SK-N-SH (cell line): ENCODE measurements at regions of chr18 and their contacts with region 1.

Region 1: DNA sequence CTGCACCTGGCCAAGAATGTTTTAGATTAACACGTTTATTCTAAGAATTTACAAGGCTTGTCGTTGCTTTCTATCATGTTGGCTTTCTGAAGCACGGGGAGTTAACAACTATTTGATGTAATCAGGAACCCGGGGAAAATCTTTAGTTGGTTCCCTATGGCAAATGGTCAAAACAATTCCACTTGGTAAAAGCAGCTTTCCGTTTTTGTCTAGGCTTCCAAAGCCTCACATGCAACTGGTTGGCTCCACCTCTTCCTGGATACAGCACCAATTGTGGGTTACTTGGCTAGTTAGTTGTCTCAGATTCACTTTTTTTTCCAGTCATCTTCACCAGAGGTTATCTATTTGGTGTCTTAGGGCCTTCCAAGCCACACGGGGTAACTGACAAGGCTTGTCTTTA is 2.8 kb downstream of the COLEC12 start:
- DNase-seq: no peak
- H3K4me3 ChIP-seq: no peak overlapping the region
- H3K27ac ChIP-seq: no peak overlapping the region
- H3K4me1 ChIP-seq: peaks cover 10 to 17% of the 10 kb centered on the region in 2 experiments; a peak in 3 of 4 replicates
- H3K27me3 ChIP-seq: 0 out of 2 replicates have a peak, but pooled peaks cover 9% of the 10 kb centered on the region
- CTCF ChIP-seq: no peak
- EP300 ChIP-seq: no peak
- RAD21 ChIP-seq: no peak

Region 2: GRCh38 chr18:477565-477964 is 20.1 kb before region 1 on chr18:
- CTCF ChIA-PET with region 1: interaction called, 11 read pairs
- POLR2A ChIA-PET with region 1: no interaction called
- DNase-seq: no peak
- H3K4me3 ChIP-seq: no peak overlapping the region
- H3K27ac ChIP-seq: no peak overlapping the region
- H3K4me1 ChIP-seq: peaks cover 0 to 29% of the 10 kb centered on the region in 2 experiments; a peak in 3 of 4 replicates
- H3K27me3 ChIP-seq: no peaks in the 10 kb centered on the region
- CTCF ChIP-seq: peak; percentile 31
- EP300 ChIP-seq: no peak
- RAD21 ChIP-seq: peak; percentile 9; the same call in 1 of the 2 replicates

Region 3: GRCh38 chr18:484749-485464 is 12.8 kb before region 1 on chr18:
- CTCF ChIA-PET with region 1: interaction called, 12 read pairs
- POLR2A ChIA-PET with region 1: no interaction called
- DNase-seq: no peak
- H3K4me3 ChIP-seq: no peak overlapping the region
- H3K27ac ChIP-seq: no peak overlapping the region
- H3K4me1 ChIP-seq: peaks cover 0 to 14% of the 10 kb centered on the region in 2 experiments; a peak in 2 of 4 replicates
- H3K27me3 ChIP-seq: no peaks in the 10 kb centered on the region
- CTCF ChIP-seq: no peak
- EP300 ChIP-seq: no peak
- RAD21 ChIP-seq: no peak